Posterior vena cava (tissue), 2 donors: ENCODE measurements at regions of chr19 and their contacts with region 1.

Region 1: GRCh38 chr19:35977446-35978222 is 17.4 kb upstream of the SDHAF1 start:
- DNase-seq: no peak

Region 2: DNA sequence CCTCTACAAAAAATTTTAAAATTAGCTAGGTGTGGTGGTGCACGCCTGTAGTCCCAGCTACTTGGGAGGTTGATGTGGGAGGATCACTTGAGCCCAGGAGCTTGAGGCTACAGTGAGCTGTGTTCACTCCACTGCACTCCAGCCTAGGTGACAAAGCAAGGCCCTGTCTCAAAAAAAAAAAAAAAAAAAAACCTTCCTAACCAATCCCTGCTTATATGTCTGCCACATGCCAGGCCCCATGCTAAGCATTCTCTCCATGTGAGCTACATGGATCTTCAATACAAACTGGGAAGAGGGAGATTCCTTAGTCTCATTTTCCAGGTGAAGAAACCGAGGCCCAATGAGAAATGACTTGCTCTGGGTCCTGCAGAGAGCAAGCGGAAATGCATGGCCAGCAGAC is 131.1 kb after region 1 on chr19:
- intact Hi-C with region 1: loop called in 1 of 2 experiments (anchors 1 kb)
- DNase-seq: no peak